Activated B cell treated with CpG ODN at 0.5 μM for 24 hours (primary cell): ENCODE measurements at regions of chr14 and their contacts with region 1.

Region 1: GRCh38 chr14:53591816-53592215 is 364.8 kb downstream of the BMP4 start:
- DNase-seq: no peak
- ATAC-seq: no peak
- H3K4me3 Mint-ChIP-seq: no peak overlapping the region
- H3K27ac Mint-ChIP-seq: no peak overlapping the region
- H3K4me1 Mint-ChIP-seq: no peaks in the 10 kb centered on the region
- H3K27me3 Mint-ChIP-seq: peaks cover 12% of the 10 kb centered on the region
- CTCF ChIP-seq: no peak

Region 2: GRCh38 chr14:53161758-53162435 is 429.9 kb before region 1 on chr14:
- CTCF ChIA-PET with region 1: no interaction called
- POLR2A ChIA-PET with region 1: no interaction called
- intact Hi-C with region 1: no loop called
- DNase-seq: no peak
- ATAC-seq: no peak
- H3K4me3 Mint-ChIP-seq: no peak overlapping the region
- H3K27ac Mint-ChIP-seq: no peak overlapping the region
- H3K4me1 Mint-ChIP-seq: no peaks in the 10 kb centered on the region
- H3K27me3 Mint-ChIP-seq: no peaks in the 10 kb centered on the region
- CTCF ChIP-seq: no peak

Region 3: DNA sequence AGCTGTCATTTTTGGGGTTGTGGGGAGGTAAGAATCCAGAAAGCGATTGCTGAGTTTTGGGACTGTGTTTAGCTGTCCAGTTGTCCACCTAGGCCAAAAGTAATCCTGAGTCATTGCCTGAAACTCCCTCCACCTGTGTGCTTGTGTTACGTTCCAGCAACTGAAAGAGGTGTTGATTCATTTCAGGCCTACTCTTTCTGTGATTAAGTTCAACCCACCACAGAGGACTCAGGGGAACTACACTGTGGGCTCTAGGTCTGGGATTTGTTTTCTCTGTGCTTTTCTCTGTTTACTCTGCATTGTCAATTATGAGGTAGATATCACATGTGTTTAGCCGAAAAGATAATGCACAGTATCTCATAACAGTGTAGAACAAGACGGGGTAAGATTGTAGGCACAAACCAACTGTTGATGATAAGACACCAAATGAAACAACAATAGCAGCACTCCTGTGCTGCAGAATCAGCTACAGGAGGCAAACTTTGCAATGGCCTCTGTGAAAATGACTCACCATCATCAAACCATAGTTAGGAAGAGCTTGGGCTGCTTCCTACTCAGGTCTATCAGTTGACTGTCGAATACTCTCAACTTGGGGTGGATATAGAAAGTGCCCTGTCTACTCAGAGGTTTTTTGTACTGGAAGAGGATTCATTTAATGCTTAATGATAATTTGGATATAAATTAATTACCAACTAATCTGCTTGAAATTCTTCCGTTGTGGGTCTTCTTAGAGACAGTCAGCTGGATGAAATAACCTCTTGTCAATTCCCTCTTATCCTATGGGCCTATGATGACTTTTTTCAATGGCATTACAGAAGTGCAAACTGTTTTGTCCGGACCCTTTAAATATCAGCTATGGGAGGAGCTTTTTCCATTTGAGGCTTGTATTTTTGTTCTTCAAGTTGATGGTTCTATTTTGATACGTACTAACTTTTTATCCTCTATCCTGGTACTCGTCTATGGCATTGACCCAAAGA is 21.1 kb before region 1 on chr14:
- CTCF ChIA-PET with region 1: no interaction called
- POLR2A ChIA-PET with region 1: no interaction called
- intact Hi-C with region 1: loop called (anchors 2 kb)
- DNase-seq: no peak
- ATAC-seq: peak; percentile 84
- H3K4me3 Mint-ChIP-seq: peak overlapping the region; percentile 8
- H3K27ac Mint-ChIP-seq: peak overlapping the region; percentile 14
- H3K4me1 Mint-ChIP-seq: peaks cover 17% of the 10 kb centered on the region
- H3K27me3 Mint-ChIP-seq: peaks cover 4% of the 10 kb centered on the region
- CTCF ChIP-seq: no peak

Region 4: DNA sequence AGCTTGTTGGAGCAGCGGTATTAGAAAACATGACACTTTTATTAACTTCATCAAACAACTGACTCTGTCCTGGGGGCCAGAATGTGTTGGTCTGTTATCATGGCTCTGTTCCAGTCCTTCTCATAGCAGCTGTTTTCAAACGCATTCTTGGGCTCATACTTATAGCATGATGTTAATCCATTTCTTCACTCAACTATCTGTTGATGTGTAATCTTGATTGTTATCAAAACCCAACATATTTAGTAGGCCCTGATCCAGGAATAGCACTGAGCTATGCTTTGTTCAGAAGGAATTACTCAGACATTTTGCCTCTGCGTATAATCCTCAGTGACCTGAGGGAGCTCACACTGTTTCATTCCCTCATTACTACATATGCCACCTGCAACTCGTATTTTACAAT is 48.9 kb after region 1 on chr14:
- CTCF ChIA-PET with region 1: no interaction called
- POLR2A ChIA-PET with region 1: no interaction called
- intact Hi-C with region 1: no loop called
- DNase-seq: no peak
- ATAC-seq: no peak
- H3K4me3 Mint-ChIP-seq: no peak overlapping the region
- H3K27ac Mint-ChIP-seq: no peak overlapping the region
- H3K4me1 Mint-ChIP-seq: no peaks in the 10 kb centered on the region
- H3K27me3 Mint-ChIP-seq: no peaks in the 10 kb centered on the region
- CTCF ChIP-seq: no peak